ENCODE measurements at regions of chr19 and their contacts with region 1.

Region 1: DNA sequence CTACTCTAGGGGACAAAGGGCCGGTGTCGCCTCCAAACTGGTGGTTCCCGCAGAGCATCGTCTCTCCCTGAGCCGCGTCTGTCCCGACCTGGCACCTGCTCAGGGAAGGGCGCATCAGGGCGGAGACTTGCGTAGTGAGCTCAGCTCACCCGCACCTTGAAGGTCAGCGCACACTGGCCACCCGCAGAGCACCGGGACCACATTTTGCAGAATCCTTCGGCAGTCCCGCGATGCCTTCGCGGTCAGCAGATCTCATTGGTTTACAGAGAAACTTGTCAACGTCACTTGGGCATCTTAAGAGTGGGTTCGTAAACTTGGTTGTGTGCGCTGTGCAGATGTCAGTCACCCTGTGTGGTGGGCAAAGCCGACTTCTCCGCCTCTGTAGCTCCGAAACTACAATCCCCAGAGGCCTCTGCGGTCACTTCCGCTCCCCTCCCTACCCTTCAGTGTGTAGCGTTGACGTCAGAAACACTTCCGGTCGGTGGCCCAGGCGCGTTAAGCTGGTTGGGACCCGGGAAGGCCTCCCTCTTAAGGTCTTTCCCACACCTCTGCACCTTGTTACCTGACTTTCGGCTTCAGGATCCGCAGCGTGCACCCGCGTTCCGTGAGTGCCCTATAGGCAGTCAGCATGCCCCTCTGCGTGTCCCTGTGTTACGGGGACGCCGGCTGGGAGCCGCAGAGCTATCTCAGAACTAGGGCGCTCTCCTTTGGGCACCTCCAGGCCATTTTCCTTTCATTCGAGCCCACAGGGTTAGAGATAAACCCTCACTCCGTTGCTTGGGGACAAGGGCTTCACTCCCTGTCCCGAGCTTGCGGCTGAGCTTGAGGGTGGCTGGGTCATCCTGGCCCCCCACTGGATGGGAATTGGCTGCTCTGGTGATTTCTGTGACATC is 36.5 kb upstream of the ZNF527 start:
- DNase-seq: peak; percentile 64
- ATAC-seq: peak; percentile 99
- H3K4me3 ChIP-seq: peak overlapping the region; percentile 89 to 97
- H3K27ac ChIP-seq: peak overlapping the region; percentile 96
- H3K4me1 ChIP-seq: peaks cover 27% of the 10 kb centered on the region
- H3K27me3 ChIP-seq: no peaks in the 10 kb centered on the region
- CTCF ChIP-seq: no peak

Region 2: GRCh38 chr19:37519890-37520289 is 185.5 kb after region 1 on chr19:
- CTCF ChIA-PET with region 1: interaction called, 17 read pairs
- POLR2A ChIA-PET with region 1: no interaction called
- in situ Hi-C with region 1: no loop called
- intact Hi-C with region 1: no loop called
- DNase-seq: no peak
- ATAC-seq: peak; percentile 91
- H3K4me3 ChIP-seq: no peak overlapping the region
- H3K27ac ChIP-seq: no peak overlapping the region
- H3K4me1 ChIP-seq: no peaks in the 10 kb centered on the region
- H3K27me3 ChIP-seq: no peaks in the 10 kb centered on the region
- CTCF ChIP-seq: no peak

Region 3: DNA sequence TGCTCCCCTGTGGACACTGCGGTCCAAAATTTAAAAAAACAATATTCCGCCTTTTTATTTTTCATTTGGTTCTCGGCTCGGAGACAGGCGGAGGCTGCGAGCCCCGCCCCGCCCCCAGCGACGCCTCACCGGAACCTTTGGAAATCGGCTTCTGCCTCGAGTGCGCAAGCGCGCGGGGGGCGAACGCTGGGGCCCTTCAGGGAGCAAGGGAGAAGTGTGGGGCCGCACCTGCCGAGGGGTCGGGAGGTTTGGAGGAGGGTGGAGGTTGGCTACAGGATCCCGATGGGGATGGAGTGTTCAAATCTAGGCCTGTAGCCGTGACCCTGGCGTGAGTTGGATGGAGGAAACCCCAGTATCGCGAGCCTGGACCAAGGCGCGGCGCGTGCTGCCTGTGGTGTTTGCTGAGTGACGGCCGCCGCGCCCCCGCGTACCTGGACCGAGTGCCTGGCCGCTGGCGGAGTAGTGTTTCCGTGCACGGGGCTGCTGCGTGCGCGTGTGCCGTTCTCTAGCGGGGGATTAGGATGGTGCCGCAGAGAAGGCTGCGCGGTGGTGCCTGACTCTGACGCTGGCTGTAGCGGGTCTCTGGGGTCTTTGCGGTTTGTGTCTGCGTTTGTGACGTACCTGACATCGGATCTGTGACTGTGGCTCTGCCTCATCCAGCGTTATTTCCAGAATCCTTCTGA is 321.4 kb after region 1 on chr19:
- CTCF ChIA-PET with region 1: no interaction called
- POLR2A ChIA-PET with region 1: no interaction called
- in situ Hi-C with region 1: no loop called
- intact Hi-C with region 1: no loop called
- DNase-seq: peak; percentile 71
- ATAC-seq: peak; percentile 89
- H3K4me3 ChIP-seq: peak overlapping the region; percentile 73 to 93
- H3K27ac ChIP-seq: peak overlapping the region; percentile 97
- H3K4me1 ChIP-seq: peaks cover 8% of the 10 kb centered on the region; the same call in 1 of the 2 replicates
- H3K27me3 ChIP-seq: no peaks in the 10 kb centered on the region
- CTCF ChIP-seq: no peak